ENCODE measurements at regions of chr3 and their contacts with region 1.

Region 1: GRCh38 chr3:113769551-113769950 is 22.7 kb downstream of the ATP6V1A start:
- DNase-seq: peak; percentile 51
- ATAC-seq: peak; percentile 97
- H3K4me3 ChIP-seq: no peak overlapping the region
- H3K27ac ChIP-seq: no peak overlapping the region
- H3K4me1 ChIP-seq: peaks cover 8% of the 10 kb centered on the region
- H3K27me3 ChIP-seq: no peaks in the 10 kb centered on the region
- CTCF ChIP-seq: no peak

Region 2: DNA sequence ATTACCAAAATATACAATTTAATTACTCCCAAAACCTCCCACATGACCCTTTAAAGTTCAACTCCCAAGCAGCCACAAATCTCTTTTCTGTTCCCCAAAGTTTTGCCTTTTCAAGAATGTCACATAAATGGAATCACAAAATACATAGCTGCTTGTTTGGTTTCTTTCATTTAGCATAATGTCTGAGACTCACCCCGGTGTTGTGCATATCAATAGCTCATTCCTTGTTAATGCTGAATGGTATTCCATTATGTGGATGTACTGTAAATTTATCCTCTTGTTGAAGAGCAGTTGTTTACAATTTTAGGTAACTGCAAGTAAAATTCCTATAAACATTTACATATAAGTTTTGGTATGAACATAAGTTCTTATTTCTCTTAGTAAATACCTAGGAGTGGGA is 39.0 kb before region 1 on chr3:
- CTCF ChIA-PET with region 1: no interaction called
- POLR2A ChIA-PET with region 1: no interaction called
- intact Hi-C with region 1: no loop called
- DNase-seq: no peak
- ATAC-seq: no peak
- H3K4me3 ChIP-seq: no peak overlapping the region
- H3K27ac ChIP-seq: no peak overlapping the region
- H3K4me1 ChIP-seq: no peaks in the 10 kb centered on the region
- H3K27me3 ChIP-seq: no peaks in the 10 kb centered on the region
- CTCF ChIP-seq: no peak

Region 3: GRCh38 chr3:113812854-113813253 is 43.3 kb after region 1 on chr3:
- CTCF ChIA-PET with region 1: no interaction called
- POLR2A ChIA-PET with region 1: interaction called, 12 read pairs
- intact Hi-C with region 1: no loop called
- DNase-seq: no peak
- ATAC-seq: no peak
- H3K4me3 ChIP-seq: no peak overlapping the region
- H3K27ac ChIP-seq: no peak overlapping the region
- H3K4me1 ChIP-seq: no peaks in the 10 kb centered on the region
- H3K27me3 ChIP-seq: no peaks in the 10 kb centered on the region
- CTCF ChIP-seq: no peak

Region 4: GRCh38 chr3:114213627-114214541 is 444.3 kb after region 1 on chr3:
- CTCF ChIA-PET with region 1: no interaction called
- POLR2A ChIA-PET with region 1: no interaction called
- intact Hi-C with region 1: no loop called
- DNase-seq: no peak
- ATAC-seq: no peak
- H3K4me3 ChIP-seq: no peak overlapping the region
- H3K27ac ChIP-seq: no peak overlapping the region
- H3K4me1 ChIP-seq: no peaks in the 10 kb centered on the region
- H3K27me3 ChIP-seq: peaks cover 23% of the 10 kb centered on the region
- CTCF ChIP-seq: no peak